MCF 10A (cell line): ENCODE measurements at regions of chr15 and their contacts with region 1.

Region 1: GRCh38 chr15:79853458-79854328 is 43.1 kb downstream of the MTHFS start:
- DNase-seq: peak; percentile 82
- H3K4me3 Mint-ChIP-seq: no peak overlapping the region
- H3K27ac Mint-ChIP-seq: no peak overlapping the region
- H3K4me1 Mint-ChIP-seq: peaks cover 8% of the 10 kb centered on the region
- H3K27me3 Mint-ChIP-seq: no peaks in the 10 kb centered on the region
- CTCF ChIP-seq: peak; percentile 85

Region 2: GRCh38 chr15:79339564-79340314 is 514.0 kb before region 1 on chr15:
- CTCF ChIA-PET with region 1: interaction called, 50 read pairs
- POLR2A ChIA-PET with region 1: no interaction called
- intact Hi-C with region 1: loop called (anchors 2 kb)
- DNase-seq: peak; percentile 47
- H3K4me3 Mint-ChIP-seq: no peak overlapping the region
- H3K27ac Mint-ChIP-seq: no peak overlapping the region
- H3K4me1 Mint-ChIP-seq: no peaks in the 10 kb centered on the region
- H3K27me3 Mint-ChIP-seq: no peaks in the 10 kb centered on the region
- CTCF ChIP-seq: peak; percentile 72

Region 3: GRCh38 chr15:79466488-79466887 is 387.2 kb before region 1 on chr15:
- CTCF ChIA-PET with region 1: no interaction called
- POLR2A ChIA-PET with region 1: no interaction called
- intact Hi-C with region 1: no loop called
- DNase-seq: no peak
- H3K4me3 Mint-ChIP-seq: no peak overlapping the region
- H3K27ac Mint-ChIP-seq: no peak overlapping the region
- H3K4me1 Mint-ChIP-seq: no peaks in the 10 kb centered on the region
- H3K27me3 Mint-ChIP-seq: no peaks in the 10 kb centered on the region
- CTCF ChIP-seq: no peak

Region 4: GRCh38 chr15:79596051-79596507 is 257.6 kb before region 1 on chr15:
- CTCF ChIA-PET with region 1: interaction called, 4 read pairs
- POLR2A ChIA-PET with region 1: no interaction called
- intact Hi-C with region 1: loop called (anchors 5 kb)
- DNase-seq: peak; percentile 95
- H3K4me3 Mint-ChIP-seq: no peak overlapping the region
- H3K27ac Mint-ChIP-seq: no peak overlapping the region
- H3K4me1 Mint-ChIP-seq: no peaks in the 10 kb centered on the region
- H3K27me3 Mint-ChIP-seq: peaks cover 47% of the 10 kb centered on the region
- CTCF ChIP-seq: peak; percentile 84

Region 5: GRCh38 chr15:79863886-79864285 is 10.2 kb after region 1 on chr15:
- CTCF ChIA-PET with region 1: interaction called, 13 read pairs
- POLR2A ChIA-PET with region 1: interaction called, 3 read pairs
- intact Hi-C with region 1: no loop called
- DNase-seq: peak; percentile 63
- H3K4me3 Mint-ChIP-seq: no peak overlapping the region
- H3K27ac Mint-ChIP-seq: peak overlapping the region; percentile 26
- H3K4me1 Mint-ChIP-seq: peaks cover 16% of the 10 kb centered on the region
- H3K27me3 Mint-ChIP-seq: no peaks in the 10 kb centered on the region
- CTCF ChIP-seq: no peak

Region 6: GRCh38 chr15:79923515-79924395 is 70.1 kb after region 1 on chr15:
- CTCF ChIA-PET with region 1: interaction called, 5 read pairs
- POLR2A ChIA-PET with region 1: interaction called, 9 read pairs
- intact Hi-C with region 1: loop called (anchors 10 kb)
- DNase-seq: peak; percentile 96
- H3K4me3 Mint-ChIP-seq: peak overlapping the region; percentile 97
- H3K27ac Mint-ChIP-seq: peak overlapping the region; percentile 97
- H3K4me1 Mint-ChIP-seq: peaks cover 8% of the 10 kb centered on the region
- H3K27me3 Mint-ChIP-seq: peaks cover under 1% of the 10 kb centered on the region
- CTCF ChIP-seq: no peak

Region 7: GRCh38 chr15:80173022-80173759 is 319.5 kb after region 1 on chr15:
- CTCF ChIA-PET with region 1: interaction called, 9 read pairs
- POLR2A ChIA-PET with region 1: interaction called, 4 read pairs
- intact Hi-C with region 1: loop called (anchors 1 kb)
- DNase-seq: peak; percentile 97
- H3K4me3 Mint-ChIP-seq: no peak overlapping the region
- H3K27ac Mint-ChIP-seq: no peak overlapping the region
- H3K4me1 Mint-ChIP-seq: peaks cover 46% of the 10 kb centered on the region
- H3K27me3 Mint-ChIP-seq: no peaks in the 10 kb centered on the region
- CTCF ChIP-seq: peak; percentile 87